WTC11 (cell line): ENCODE measurements at regions of chr20 and their contacts with region 1.

Region 1: DNA sequence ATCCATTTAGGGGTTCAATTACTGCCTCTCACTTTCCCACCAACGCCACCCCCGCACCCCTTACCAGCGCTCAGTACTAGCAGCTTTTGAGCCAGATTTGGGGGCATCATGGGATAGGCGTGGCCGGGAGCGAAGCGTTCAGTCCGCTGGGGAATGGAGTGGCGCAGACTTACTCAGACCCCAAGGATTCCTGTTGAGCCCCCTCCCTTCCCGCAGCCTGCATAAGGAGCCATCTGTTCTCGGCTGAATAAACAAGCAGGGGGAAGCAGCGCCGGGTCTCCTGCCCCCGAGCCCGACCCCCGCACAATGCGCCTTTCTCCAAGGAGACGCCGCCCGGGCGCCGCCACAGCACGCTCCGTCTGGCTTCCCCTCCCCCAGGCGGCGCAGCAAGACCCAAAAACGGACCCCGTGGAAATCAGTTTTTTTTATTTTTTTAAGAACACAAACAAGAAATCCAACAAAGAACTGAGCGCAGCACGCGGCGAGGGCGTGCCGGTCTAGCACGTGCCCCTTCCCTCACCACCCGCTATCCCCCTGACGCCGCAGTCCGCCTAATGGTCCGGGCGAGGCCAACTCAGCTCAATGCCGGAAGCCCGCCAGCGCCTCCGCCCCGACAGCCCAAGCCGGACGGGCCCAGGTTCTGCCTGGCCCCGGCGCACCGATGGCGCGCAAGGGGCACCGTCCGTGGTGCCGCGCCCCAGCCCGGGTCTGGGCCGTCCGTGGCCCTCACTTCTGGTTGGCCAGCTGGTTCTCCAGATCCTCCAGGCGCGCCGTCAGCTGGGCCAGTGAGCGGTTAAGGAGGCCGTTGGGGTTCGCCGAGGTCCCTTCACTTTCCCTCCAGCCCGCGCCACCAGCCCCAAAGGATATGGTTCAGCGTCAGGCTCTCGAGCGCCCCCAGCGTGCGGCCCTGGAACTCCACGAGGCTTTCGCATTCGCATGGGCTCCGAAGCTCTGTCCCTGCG is 13.3 kb upstream of the RBPJL start:
- DNase-seq: peak; percentile 95
- ATAC-seq: peak; percentile 87
- H3K4me3 Mint-ChIP-seq: peak overlapping the region; percentile 71
- H3K27ac Mint-ChIP-seq: no peak overlapping the region
- H3K4me1 Mint-ChIP-seq: peaks cover 7% of the 10 kb centered on the region; the same call in 1 of the 2 replicates
- H3K27me3 Mint-ChIP-seq: peaks cover 66% of the 10 kb centered on the region
- CTCF ChIP-seq: peak; percentile 95

Region 2: DNA sequence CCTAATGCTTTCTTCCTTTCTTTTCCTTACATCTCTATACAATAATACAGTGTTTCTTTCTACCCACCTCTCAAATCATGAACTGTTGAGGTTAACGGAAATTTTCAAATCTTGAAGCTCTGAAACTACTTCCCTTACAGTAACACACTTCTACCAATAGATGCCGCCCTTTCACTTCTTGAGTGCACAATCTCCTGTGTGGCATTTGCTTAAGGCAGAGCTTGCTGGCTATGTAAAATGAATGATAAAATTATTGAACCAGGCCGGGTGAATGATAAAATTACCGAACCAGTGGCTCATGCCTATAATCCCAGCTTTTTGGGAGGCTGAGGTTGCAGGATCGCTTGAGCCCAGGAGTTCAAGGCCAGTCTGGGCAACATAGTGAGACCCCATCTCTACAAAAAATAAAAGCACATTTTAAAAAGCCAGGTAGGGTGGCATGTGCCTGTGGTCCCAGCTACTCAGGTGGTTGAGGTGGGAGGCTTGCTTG is 249.2 kb before region 1 on chr20:
- CTCF ChIA-PET with region 1: interaction called, 11 read pairs
- POLR2A ChIA-PET with region 1: no interaction called
- DNase-seq: no peak
- ATAC-seq: peak; percentile 81
- H3K4me3 Mint-ChIP-seq: no peak overlapping the region
- H3K27ac Mint-ChIP-seq: peak overlapping the region; percentile 37
- H3K4me1 Mint-ChIP-seq: peaks cover 47% of the 10 kb centered on the region
- H3K27me3 Mint-ChIP-seq: no peaks in the 10 kb centered on the region
- CTCF ChIP-seq: peak; percentile 38

Region 3: DNA sequence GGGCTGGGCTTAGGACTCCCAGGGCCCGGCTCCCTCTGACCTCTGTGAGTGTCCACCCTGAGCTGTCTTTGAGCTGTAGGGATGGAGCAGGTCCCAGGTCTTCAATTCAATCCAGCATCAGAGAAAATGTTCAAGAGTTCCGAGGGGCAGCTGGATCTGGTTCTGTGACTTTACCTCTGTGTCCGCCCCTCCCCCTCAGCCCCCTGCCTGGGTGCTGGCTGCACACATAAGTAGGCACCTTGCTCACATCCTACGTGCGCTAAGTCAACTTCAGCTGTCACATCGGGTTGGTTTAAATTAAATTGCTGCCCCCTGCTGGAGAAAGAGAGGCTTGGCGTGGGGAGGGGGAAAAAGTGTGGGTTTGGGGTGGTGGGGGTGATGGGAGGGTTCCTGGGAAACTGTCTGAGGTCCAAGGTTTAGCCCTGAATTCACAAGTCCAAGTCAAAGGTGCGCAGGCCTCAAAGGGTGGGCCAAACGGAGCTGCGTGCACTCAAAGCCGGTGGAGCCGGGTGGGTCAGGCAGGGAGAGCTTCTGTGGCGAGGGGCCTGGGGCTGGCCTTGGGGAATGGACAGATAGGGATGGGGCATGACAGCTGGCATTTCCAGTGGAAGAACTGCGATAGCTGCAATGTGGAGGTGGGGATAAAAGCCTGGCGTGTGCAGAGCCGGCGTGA is 181.4 kb before region 1 on chr20:
- CTCF ChIA-PET with region 1: interaction called, 22 read pairs
- POLR2A ChIA-PET with region 1: no interaction called
- DNase-seq: peak; percentile 52
- ATAC-seq: peak; percentile 54
- H3K4me3 Mint-ChIP-seq: no peak overlapping the region
- H3K27ac Mint-ChIP-seq: no peak overlapping the region
- H3K4me1 Mint-ChIP-seq: peaks cover 8% of the 10 kb centered on the region; the same call in 1 of the 2 replicates
- H3K27me3 Mint-ChIP-seq: peaks cover 4% of the 10 kb centered on the region; the same call in 1 of the 2 replicates
- CTCF ChIP-seq: peak; percentile 71

Region 4: GRCh38 chr20:45268531-45268930 is 24.8 kb before region 1 on chr20:
- CTCF ChIA-PET with region 1: interaction called, 22 read pairs
- POLR2A ChIA-PET with region 1: no interaction called
- DNase-seq: no peak
- ATAC-seq: no peak
- H3K4me3 Mint-ChIP-seq: no peak overlapping the region
- H3K27ac Mint-ChIP-seq: no peak overlapping the region
- H3K4me1 Mint-ChIP-seq: peaks cover 17% of the 10 kb centered on the region
- H3K27me3 Mint-ChIP-seq: no peaks in the 10 kb centered on the region; the same call in 1 of the 2 replicates
- CTCF ChIP-seq: no peak

Region 5: DNA sequence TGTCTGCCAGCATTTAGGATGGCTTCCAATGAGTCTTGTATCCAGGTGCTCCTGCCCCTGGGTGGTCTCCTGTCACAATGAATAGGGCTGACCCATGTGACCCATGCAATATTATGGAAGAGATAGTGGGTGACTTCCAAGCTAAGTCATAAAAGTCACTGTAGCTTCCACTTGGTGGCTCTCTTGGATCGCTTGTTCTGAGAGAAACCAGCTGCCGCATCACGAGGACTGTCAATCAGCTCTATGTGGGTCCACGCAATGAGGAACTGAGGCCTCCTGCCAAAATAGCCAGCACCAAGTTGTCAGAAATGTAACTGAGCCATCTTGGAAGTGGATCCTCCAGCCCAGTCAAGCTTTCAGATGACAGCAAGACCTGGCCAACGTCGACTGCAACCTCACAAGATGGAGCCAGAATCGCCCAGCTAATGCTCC is 29.6 kb after region 1 on chr20:
- CTCF ChIA-PET with region 1: interaction called, 11 read pairs
- POLR2A ChIA-PET with region 1: no interaction called
- DNase-seq: no peak
- ATAC-seq: peak; percentile 49
- H3K4me3 Mint-ChIP-seq: no peak overlapping the region
- H3K27ac Mint-ChIP-seq: no peak overlapping the region
- H3K4me1 Mint-ChIP-seq: peaks cover 2% of the 10 kb centered on the region; the same call in 1 of the 2 replicates
- H3K27me3 Mint-ChIP-seq: no peaks in the 10 kb centered on the region
- CTCF ChIP-seq: no peak

Region 6: DNA sequence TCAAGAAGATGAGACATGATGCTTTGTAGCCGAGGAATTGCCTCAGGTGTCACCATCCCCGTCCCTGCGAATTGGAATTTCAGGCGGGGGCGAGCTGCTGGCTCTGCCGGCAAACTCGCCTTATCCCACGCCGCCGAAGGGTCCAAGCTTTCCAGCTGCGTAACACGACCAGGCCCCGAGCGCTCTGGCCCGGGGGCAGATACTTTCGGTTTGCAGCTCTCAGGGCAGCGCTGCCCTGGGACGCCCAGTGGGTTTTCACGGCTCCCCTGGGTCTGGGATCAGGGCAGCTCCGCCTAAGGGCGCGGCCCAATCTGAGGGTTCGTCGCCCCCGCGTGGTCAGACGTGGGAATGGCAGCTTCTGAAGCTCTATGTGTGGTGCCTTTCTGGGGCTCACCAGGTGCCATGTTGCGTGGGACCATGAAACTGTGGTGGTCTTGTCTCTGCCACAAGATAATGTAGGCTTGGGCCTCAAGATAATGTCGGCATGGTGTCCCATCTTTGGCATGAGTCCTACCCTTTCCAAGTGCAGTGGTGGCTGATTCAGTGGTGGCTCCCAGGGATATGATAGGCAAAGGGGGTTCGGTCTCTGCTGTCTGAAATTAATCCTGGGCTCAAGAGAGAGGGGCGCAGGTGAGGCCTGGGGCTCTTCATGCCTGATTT is 143.5 kb after region 1 on chr20:
- CTCF ChIA-PET with region 1: interaction called, 23 read pairs
- POLR2A ChIA-PET with region 1: no interaction called
- DNase-seq: peak; percentile 90
- ATAC-seq: peak; percentile 97
- H3K4me3 Mint-ChIP-seq: peak overlapping the region; percentile 82
- H3K27ac Mint-ChIP-seq: no peak overlapping the region
- H3K4me1 Mint-ChIP-seq: peaks cover 16% of the 10 kb centered on the region
- H3K27me3 Mint-ChIP-seq: peaks cover 5% of the 10 kb centered on the region; the same call in 1 of the 2 replicates
- CTCF ChIP-seq: peak; percentile 92